ENCODE measurements at regions of chr15 and their contacts with region 1.

Region 1: GRCh38 chr15:31483053-31483985 is 156.7 kb downstream of the KLF13 start:
- DNase-seq: peak; percentile 85
- ATAC-seq: peak; percentile 80
- H3K4me3 Mint-ChIP-seq: peak overlapping the region; percentile 82
- H3K27ac Mint-ChIP-seq: peak overlapping the region; percentile 95
- H3K4me1 Mint-ChIP-seq: peaks cover 65% of the 10 kb centered on the region
- H3K27me3 Mint-ChIP-seq: no peaks in the 10 kb centered on the region
- CTCF ChIP-seq: no peak

Region 2: GRCh38 chr15:31440754-31441311 is 42.5 kb before region 1 on chr15:
- CTCF ChIA-PET with region 1: interaction called, 265 read pairs
- POLR2A ChIA-PET with region 1: interaction called, 96 read pairs
- intact Hi-C with region 1: loop called (anchors 2 kb)
- DNase-seq: peak; percentile 61
- ATAC-seq: peak; percentile 8
- H3K4me3 Mint-ChIP-seq: peak overlapping the region; percentile 66
- H3K27ac Mint-ChIP-seq: peak overlapping the region; percentile 71
- H3K4me1 Mint-ChIP-seq: peaks cover 73% of the 10 kb centered on the region
- H3K27me3 Mint-ChIP-seq: no peaks in the 10 kb centered on the region
- CTCF ChIP-seq: no peak

Measured in activated CD8-positive, alpha-beta T cell treated with anti-CD3 and anti-CD28 coated beads for 36 hours (primary cell).